CD8-positive, alpha-beta T cell (primary cell): ENCODE measurements at regions of chr6 and their contacts with region 1.

Region 1: DNA sequence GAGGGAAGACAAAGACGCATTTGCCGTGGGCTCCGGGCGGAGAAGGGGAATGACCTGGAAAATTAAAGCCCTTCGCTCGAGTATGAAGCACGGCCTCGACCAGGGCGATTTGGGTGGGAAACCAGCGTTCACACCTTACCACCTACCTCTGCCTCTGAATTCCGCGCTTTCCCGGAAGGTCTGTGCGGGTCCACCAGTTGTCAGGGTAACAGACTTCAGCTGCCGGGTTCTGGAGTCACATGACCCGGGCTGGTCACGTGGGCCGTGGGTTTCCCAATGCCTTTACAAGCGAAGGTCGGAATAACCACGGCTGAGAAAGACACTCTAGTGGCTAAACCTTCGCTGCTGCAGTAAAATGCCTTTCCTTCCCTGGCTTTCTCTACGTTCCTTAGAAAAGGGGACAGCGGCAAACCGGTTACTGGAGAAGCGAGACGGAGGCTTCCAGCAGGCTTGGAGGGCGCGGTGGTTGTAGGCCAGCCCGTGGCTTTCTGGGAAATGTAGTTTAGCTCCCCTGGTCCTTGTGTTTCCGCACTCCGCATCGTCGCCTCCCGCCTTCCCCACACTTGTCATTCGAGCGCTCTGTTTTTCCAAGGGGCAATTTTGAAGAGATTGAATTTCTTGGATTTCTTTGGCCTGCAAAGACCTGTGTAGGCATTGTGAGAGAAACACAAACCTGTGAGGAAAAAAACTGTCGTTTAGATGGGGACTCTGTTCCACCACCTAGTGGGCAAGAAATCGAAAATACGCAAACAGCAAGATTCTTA is at the start of gene CEP162:
- DNase-seq: peak; percentile 77 to 93 (median 90)
- ATAC-seq: peak; percentile 92
- H3K4me3 ChIP-seq: peak within 1 kb of the TSS; percentile 91 to 92
- H3K4me3 Mint-ChIP-seq: peak within 1 kb of the TSS; percentile 100
- H3K27ac ChIP-seq: peak within 1 kb of the TSS; percentile 58 to 72
- H3K27ac Mint-ChIP-seq: peak within 1 kb of the TSS; percentile 95
- H3K4me1 ChIP-seq: peaks cover 5% of the 10 kb centered on the region
- H3K4me1 Mint-ChIP-seq: peaks cover 23% of the 10 kb centered on the region
- H3K27me3 ChIP-seq: no peaks in the 10 kb centered on the region
- H3K27me3 Mint-ChIP-seq: peaks cover 10% of the 10 kb centered on the region
- CTCF ChIP-seq: peak; percentile 88
- total RNA-seq, gene CEP162: 2.0 to 2.6 TPM

Region 2: GRCh38 chr6:82247634-82248232 is 1979.9 kb before region 1 on chr6 and contains the start of gene IBTK:
- CTCF ChIA-PET with region 1: no interaction called
- POLR2A ChIA-PET with region 1: no interaction called
- intact Hi-C with region 1: loop called (anchors 2 to 5 kb)
- DNase-seq: peak; percentile 84 to 97 (median 90)
- ATAC-seq: peak; percentile 85
- H3K4me3 ChIP-seq: peak within 1 kb of the TSS; percentile 93 to 98
- H3K4me3 Mint-ChIP-seq: peak within 1 kb of the TSS; percentile 98
- H3K27ac ChIP-seq: peak within 1 kb of the TSS; percentile 82 to 86
- H3K27ac Mint-ChIP-seq: peak within 1 kb of the TSS; percentile 97
- H3K4me1 ChIP-seq: peaks cover 24% of the 10 kb centered on the region
- H3K4me1 Mint-ChIP-seq: peaks cover 39% of the 10 kb centered on the region
- H3K27me3 ChIP-seq: no peaks in the 10 kb centered on the region
- H3K27me3 Mint-ChIP-seq: peaks cover 2% of the 10 kb centered on the region
- CTCF ChIP-seq: no peak
- total RNA-seq, gene IBTK: 9.7 to 9.9 TPM

Region 3: DNA sequence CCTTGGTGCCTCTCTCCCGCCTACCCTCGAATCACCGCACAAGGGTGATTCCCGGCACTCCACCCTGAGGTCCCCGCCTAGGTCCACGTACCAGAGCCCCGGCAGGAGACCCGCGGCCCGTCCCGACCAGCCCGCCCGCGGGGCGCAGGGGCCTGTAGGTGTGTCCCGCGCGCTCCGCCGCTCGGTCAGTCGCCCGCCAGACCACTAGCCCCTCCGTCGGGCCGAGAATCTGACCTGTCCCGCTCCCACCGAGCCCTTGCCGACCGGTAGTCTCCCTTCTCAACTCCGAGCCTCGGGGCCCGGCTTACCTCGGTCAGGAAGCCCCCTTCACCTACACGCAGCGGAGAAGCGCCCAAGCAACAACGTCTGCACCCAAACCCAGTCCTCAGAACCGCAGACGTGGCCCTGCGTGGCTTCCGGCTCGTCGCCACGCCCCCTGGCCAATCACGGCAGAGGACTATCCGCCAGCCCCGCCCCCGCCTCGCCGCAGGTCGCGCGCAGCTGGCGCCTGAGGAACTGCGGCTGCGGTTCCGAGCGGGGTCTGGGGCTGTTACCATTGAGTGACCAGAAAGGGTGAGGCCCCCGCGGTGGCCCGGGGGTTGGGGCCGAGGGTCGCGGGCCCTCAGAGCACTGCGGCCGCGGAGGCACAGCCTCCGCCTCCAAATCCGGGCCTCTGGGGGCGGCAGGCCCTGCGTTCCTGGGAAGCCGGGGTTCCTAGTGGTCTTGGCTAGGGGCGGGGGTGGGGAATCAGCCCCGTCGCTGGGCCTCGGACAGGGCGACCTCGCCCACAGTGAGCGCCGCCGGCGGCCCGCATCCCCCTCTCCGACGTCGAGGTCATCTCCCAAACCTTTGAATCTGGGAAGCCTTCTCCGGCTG is 1034.5 kb before region 1 on chr6 and contains the starts of genes PGM3 and RWDD2A:
- CTCF ChIA-PET with region 1: no interaction called
- POLR2A ChIA-PET with region 1: no interaction called
- intact Hi-C with region 1: loop called (anchors 1 to 2 kb)
- DNase-seq: peak; percentile 74 to 95 (median 90)
- ATAC-seq: peak; percentile 97
- H3K4me3 ChIP-seq: peak within 1 kb of the TSS; percentile 82 to 84
- H3K4me3 Mint-ChIP-seq: peak within 1 kb of the TSS; percentile 99
- H3K27ac ChIP-seq: peak within 1 kb of the TSS; percentile 51 to 82
- H3K27ac Mint-ChIP-seq: peak within 1 kb of the TSS; percentile 98
- H3K4me1 ChIP-seq: peaks cover 14% of the 10 kb centered on the region
- H3K4me1 Mint-ChIP-seq: peaks cover 53% of the 10 kb centered on the region
- H3K27me3 ChIP-seq: no peaks in the 10 kb centered on the region
- H3K27me3 Mint-ChIP-seq: no peaks in the 10 kb centered on the region
- CTCF ChIP-seq: no peak
- total RNA-seq, gene PGM3: 25.8 to 26.4 TPM
- total RNA-seq, gene RWDD2A: 2.1 to 2.2 TPM

Region 4: GRCh38 chr6:83221889-83222479 is 1005.6 kb before region 1 on chr6:
- CTCF ChIA-PET with region 1: interaction called, 5 read pairs
- POLR2A ChIA-PET with region 1: no interaction called
- intact Hi-C with region 1: loop called in 1 of 2 experiments (anchors 10 kb)
- DNase-seq: peak in 2 of 9 experiments; percentile 43 to 47
- ATAC-seq: no peak
- H3K4me3 ChIP-seq: no peak overlapping the region
- H3K4me3 Mint-ChIP-seq: no peak overlapping the region
- H3K27ac ChIP-seq: no peak overlapping the region
- H3K27ac Mint-ChIP-seq: no peak overlapping the region
- H3K4me1 ChIP-seq: no peaks in the 10 kb centered on the region
- H3K4me1 Mint-ChIP-seq: no peaks in the 10 kb centered on the region
- H3K27me3 ChIP-seq: no peaks in the 10 kb centered on the region
- H3K27me3 Mint-ChIP-seq: no peaks in the 10 kb centered on the region
- CTCF ChIP-seq: peak; percentile 62

Region 5: GRCh38 chr6:83859410-83860358 is 367.9 kb before region 1 on chr6 and contains the start of gene CYB5R4:
- CTCF ChIA-PET with region 1: interaction called, 9 read pairs
- POLR2A ChIA-PET with region 1: interaction called, 14 read pairs
- intact Hi-C with region 1: loop called (anchors 1 kb)
- DNase-seq: peak; percentile 87 to 97 (median 93)
- ATAC-seq: peak; percentile 96
- H3K4me3 ChIP-seq: peak within 1 kb of the TSS; percentile 69 to 78
- H3K4me3 Mint-ChIP-seq: peak within 1 kb of the TSS; percentile 95
- H3K27ac ChIP-seq: peak within 1 kb of the TSS; percentile 83 to 86
- H3K27ac Mint-ChIP-seq: peak within 1 kb of the TSS; percentile 91
- H3K4me1 ChIP-seq: peaks cover 18% of the 10 kb centered on the region
- H3K4me1 Mint-ChIP-seq: peaks cover 41% of the 10 kb centered on the region
- H3K27me3 ChIP-seq: no peaks in the 10 kb centered on the region
- H3K27me3 Mint-ChIP-seq: peaks cover 12% of the 10 kb centered on the region
- CTCF ChIP-seq: peak; percentile 52
- total RNA-seq, gene CYB5R4: 15.9 to 17.7 TPM

Region 6: DNA sequence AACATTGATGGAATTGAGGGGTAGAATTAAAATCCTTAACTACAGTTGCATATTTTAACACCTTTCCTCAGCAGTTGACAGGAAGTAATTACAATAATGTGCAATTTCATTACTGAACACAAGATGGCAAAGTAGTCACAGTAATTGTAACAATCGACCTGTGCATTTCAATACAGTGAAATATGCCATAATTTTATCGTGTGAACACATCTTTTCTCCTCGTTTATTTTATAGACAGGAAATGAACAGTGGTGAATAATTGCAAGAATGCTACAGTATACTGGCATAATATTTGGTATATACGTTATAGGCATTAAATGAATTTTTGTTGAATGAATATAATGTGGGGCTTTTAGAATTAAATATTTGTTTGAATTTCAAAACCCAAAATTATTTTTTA is 343.1 kb before region 1 on chr6:
- CTCF ChIA-PET with region 1: interaction called, 6 read pairs
- POLR2A ChIA-PET with region 1: no interaction called
- intact Hi-C with region 1: loop called in 1 of 2 experiments (anchors 2 kb)
- DNase-seq: peak in 2 of 9 experiments; percentile 50 to 66
- ATAC-seq: peak; percentile 79
- H3K4me3 ChIP-seq: no peak overlapping the region
- H3K4me3 Mint-ChIP-seq: no peak overlapping the region
- H3K27ac ChIP-seq: no peak overlapping the region
- H3K27ac Mint-ChIP-seq: no peak overlapping the region
- H3K4me1 ChIP-seq: no peaks in the 10 kb centered on the region
- H3K4me1 Mint-ChIP-seq: peaks cover 25% of the 10 kb centered on the region
- H3K27me3 ChIP-seq: no peaks in the 10 kb centered on the region
- H3K27me3 Mint-ChIP-seq: no peaks in the 10 kb centered on the region
- CTCF ChIP-seq: peak; percentile 79

Region 7: GRCh38 chr6:85642774-85643536 is 1415.3 kb after region 1 on chr6 and contains the start of gene SYNCRIP:
- CTCF ChIA-PET with region 1: no interaction called
- POLR2A ChIA-PET with region 1: no interaction called
- intact Hi-C with region 1: loop called in 1 of 2 experiments (anchors 5 kb)
- DNase-seq: peak; percentile 95 to 99 (median 98)
- ATAC-seq: peak; percentile 81
- H3K4me3 ChIP-seq: peak within 1 kb of the TSS; percentile 98 to 100
- H3K4me3 Mint-ChIP-seq: peak within 1 kb of the TSS; percentile 91
- H3K27ac ChIP-seq: peak within 1 kb of the TSS; percentile 98
- H3K27ac Mint-ChIP-seq: peak within 1 kb of the TSS; percentile 96
- H3K4me1 ChIP-seq: peaks cover 38% of the 10 kb centered on the region
- H3K4me1 Mint-ChIP-seq: peaks cover 46% of the 10 kb centered on the region
- H3K27me3 ChIP-seq: no peaks in the 10 kb centered on the region
- H3K27me3 Mint-ChIP-seq: no peaks in the 10 kb centered on the region
- CTCF ChIP-seq: no peak
- total RNA-seq, gene SYNCRIP: 64.0 to 64.3 TPM